MCF 10A (cell line): ENCODE measurements at regions of chr12 and their contacts with region 1.

Region 1: DNA sequence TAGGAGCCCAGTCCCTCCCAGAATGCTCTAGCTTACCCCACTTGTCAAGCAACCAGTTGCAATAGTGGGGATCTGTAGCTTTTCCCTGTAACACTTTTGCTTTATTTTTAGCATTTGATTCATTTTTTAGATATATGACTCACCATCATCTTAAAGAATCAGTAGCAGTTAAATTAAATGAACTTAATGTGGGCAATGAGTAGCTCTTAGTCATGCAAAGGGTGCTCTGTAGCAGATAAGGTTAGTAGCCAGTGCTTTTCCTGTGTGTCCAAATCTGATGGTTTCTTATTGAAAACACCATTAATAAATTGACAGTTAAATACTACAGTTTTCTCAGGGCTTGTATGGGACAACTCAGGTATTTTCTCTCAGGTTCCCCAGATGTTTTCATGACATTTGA is 311.8 kb downstream of the RERGL start:
- DNase-seq: no peak
- H3K4me3 Mint-ChIP-seq: no peak overlapping the region
- H3K27ac Mint-ChIP-seq: no peak overlapping the region
- H3K4me1 Mint-ChIP-seq: no peaks in the 10 kb centered on the region
- H3K27me3 Mint-ChIP-seq: no peaks in the 10 kb centered on the region
- CTCF ChIP-seq: no peak

Region 2: DNA sequence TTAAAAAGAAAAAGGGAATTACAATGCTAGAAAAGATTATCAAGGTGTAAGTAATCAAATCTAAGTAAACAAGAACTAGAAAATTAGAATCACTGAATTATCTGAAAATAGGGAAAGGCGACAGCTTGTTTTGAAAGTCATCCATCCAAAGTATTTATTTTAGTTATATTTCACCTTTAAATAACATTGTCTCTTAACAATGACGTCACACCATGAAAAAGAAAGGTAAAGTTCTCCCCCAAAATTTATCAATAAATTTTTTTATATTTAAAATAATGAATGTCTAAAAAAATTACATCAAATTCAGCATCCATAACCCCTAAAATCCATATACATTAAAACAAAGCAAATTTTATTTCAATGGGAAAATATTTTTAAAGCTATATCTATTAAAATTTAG is 88.6 kb after region 1 on chr12:
- CTCF ChIA-PET with region 1: no interaction called
- POLR2A ChIA-PET with region 1: no interaction called
- intact Hi-C with region 1: loop called (anchors 5 kb)
- DNase-seq: no peak
- H3K4me3 Mint-ChIP-seq: no peak overlapping the region
- H3K27ac Mint-ChIP-seq: no peak overlapping the region
- H3K4me1 Mint-ChIP-seq: no peaks in the 10 kb centered on the region
- H3K27me3 Mint-ChIP-seq: peaks cover 17% of the 10 kb centered on the region
- CTCF ChIP-seq: no peak

Region 3: GRCh38 chr12:17875230-17875629 is 97.0 kb after region 1 on chr12:
- CTCF ChIA-PET with region 1: no interaction called
- POLR2A ChIA-PET with region 1: no interaction called
- intact Hi-C with region 1: loop called (anchors 5 kb)
- DNase-seq: peak; percentile 27
- H3K4me3 Mint-ChIP-seq: no peak overlapping the region
- H3K27ac Mint-ChIP-seq: no peak overlapping the region
- H3K4me1 Mint-ChIP-seq: no peaks in the 10 kb centered on the region
- H3K27me3 Mint-ChIP-seq: peaks cover 55% of the 10 kb centered on the region
- CTCF ChIP-seq: peak; percentile 15